AG04450 (cell line): ENCODE measurements at regions of chr20 and their contacts with region 1.

Region 1: DNA sequence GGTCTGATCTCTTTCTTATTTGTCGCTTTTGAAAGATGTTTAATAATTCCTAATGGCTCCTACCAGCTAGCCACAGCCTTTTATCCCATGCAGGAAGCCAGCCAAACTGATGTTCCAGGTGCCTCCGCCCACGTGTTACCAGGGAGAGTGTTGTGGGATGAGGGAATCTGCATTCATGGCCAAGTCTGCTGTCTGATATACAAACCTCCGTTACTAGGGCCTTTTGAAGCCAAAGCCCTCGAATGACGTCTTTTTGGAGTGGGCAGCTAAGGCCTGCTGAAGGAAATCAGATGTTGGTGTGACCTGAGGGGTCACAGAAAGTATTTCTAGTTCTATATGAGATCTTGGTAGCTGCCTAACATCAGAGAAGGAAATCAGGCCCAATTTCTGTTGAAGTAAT is 21.3 kb downstream of the STK35 start:
- DNase-seq: peak; percentile 81
- H3K4me3 ChIP-seq: no peak overlapping the region
- H3K27ac ChIP-seq: peak overlapping the region; percentile 66
- H3K27me3 ChIP-seq: no peaks in the 10 kb centered on the region
- CTCF ChIP-seq: no peak

Region 2: GRCh38 chr20:2101865-2102584 is 20.9 kb before region 1 on chr20:
- CTCF ChIA-PET with region 1: no interaction called
- POLR2A ChIA-PET with region 1: interaction called, 10 read pairs
- DNase-seq: peak; percentile 83
- H3K4me3 ChIP-seq: peak overlapping the region; percentile 98
- H3K27ac ChIP-seq: peak overlapping the region; percentile 100
- H3K27me3 ChIP-seq: no peaks in the 10 kb centered on the region
- CTCF ChIP-seq: no peak

Region 3: GRCh38 chr20:2301164-2301622 is 178.3 kb after region 1 on chr20:
- CTCF ChIA-PET with region 1: no interaction called
- POLR2A ChIA-PET with region 1: no interaction called
- DNase-seq: no peak
- H3K4me3 ChIP-seq: no peak overlapping the region
- H3K27ac ChIP-seq: no peak overlapping the region
- H3K27me3 ChIP-seq: peaks cover 7% of the 10 kb centered on the region
- CTCF ChIP-seq: no peak